Mammary epithelial cell (primary cell): ENCODE measurements at regions of chr13 and their contacts with region 1.

Region 1: GRCh38 chr13:73248711-73249578 is 190.1 kb downstream of the KLF5 start:
- DNase-seq: peak; percentile 86
- H3K4me3 ChIP-seq: no peak overlapping the region
- H3K27ac ChIP-seq: peak overlapping the region; percentile 60
- H3K4me1 ChIP-seq: peaks cover 17% of the 10 kb centered on the region
- H3K27me3 ChIP-seq: no peaks in the 10 kb centered on the region
- CTCF ChIP-seq: peak in 1 of 2 donors; percentile 0

Region 2: DNA sequence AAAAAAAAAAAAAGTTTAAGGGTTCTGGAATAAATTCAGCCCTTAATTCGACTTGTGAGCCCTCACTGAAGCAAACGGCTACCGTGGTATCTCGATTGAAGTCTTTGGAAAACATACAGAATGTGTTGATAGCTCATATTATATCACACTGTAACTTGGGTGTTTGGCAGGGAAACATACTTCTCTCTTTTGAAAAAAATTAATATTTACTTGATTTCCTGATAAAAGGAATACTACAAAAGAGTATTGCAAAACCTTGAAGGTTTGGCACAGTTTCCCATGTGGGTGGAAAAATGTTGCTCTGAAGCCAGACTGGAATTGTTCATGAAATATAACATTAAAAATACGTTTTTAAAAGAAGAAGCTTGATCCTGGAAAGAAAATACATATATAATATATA is 48.5 kb before region 1 on chr13:
- CTCF ChIA-PET with region 1: no interaction called
- dilution Hi-C with region 1: loop called (anchors 5 kb)
- in situ Hi-C with region 1: no loop called
- intact Hi-C with region 1: no loop called
- DNase-seq: no peak
- H3K4me3 ChIP-seq: no peak overlapping the region
- H3K27ac ChIP-seq: peak overlapping the region; percentile 81
- H3K4me1 ChIP-seq: peaks cover 16% of the 10 kb centered on the region
- H3K27me3 ChIP-seq: no peaks in the 10 kb centered on the region
- CTCF ChIP-seq: no peak

Region 3: GRCh38 chr13:73465617-73465971 is 216.6 kb after region 1 on chr13:
- CTCF ChIA-PET with region 1: no interaction called
- dilution Hi-C with region 1: no loop called
- in situ Hi-C with region 1: no loop called
- intact Hi-C with region 1: no loop called
- DNase-seq: peak; percentile 96
- H3K4me3 ChIP-seq: no peak overlapping the region
- H3K27ac ChIP-seq: peak overlapping the region; percentile 94
- H3K4me1 ChIP-seq: peaks cover 31% of the 10 kb centered on the region
- H3K27me3 ChIP-seq: no peaks in the 10 kb centered on the region
- CTCF ChIP-seq: peak; percentile 11 to 34